HEK293T (cell line): ENCODE measurements at regions of chr16 and their contacts with region 1.

Region 1: DNA sequence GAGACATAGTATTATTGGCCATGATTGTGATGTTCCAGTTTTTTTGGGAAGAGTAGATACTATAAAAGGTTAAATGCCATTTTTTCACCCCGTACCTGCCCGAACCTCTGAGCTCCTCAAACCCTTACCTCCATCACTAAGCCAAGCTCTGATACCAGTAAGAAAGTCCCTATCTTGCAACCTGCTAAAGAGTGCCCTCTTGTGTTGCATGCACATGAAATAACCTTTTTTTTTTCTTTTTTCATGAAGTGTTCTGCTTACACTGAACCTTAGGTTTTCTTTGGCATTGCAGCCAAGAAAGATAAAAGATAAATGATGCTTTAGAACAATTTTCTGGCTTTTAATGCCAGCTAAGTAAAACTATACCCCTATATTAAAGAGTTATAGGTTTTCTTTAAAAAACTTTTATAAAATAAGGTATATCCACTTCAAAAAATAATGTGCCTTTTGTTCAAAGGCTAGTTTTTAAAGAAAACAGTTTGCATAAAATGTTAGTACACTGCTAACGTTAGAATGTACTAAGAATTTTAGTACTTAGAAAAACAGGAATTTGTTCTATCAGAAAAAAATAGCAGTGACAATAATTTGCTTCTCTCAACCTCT is 295.3 kb upstream of the PMFBP1 start:
- DNase-seq: peak; percentile 31

Region 2: GRCh38 chr16:72124761-72125634 is 342.3 kb before region 1 on chr16:
- CTCF ChIA-PET with region 1: interaction called, 12 read pairs
- POLR2A ChIA-PET with region 1: no interaction called
- DNase-seq: peak; percentile 78

Region 3: GRCh38 chr16:72220875-72221629 is 246.2 kb before region 1 on chr16:
- CTCF ChIA-PET with region 1: no interaction called
- POLR2A ChIA-PET with region 1: no interaction called
- DNase-seq: no peak

Region 4: GRCh38 chr16:72422308-72422897 is 44.9 kb before region 1 on chr16:
- CTCF ChIA-PET with region 1: no interaction called
- POLR2A ChIA-PET with region 1: no interaction called
- DNase-seq: no peak

Region 5: DNA sequence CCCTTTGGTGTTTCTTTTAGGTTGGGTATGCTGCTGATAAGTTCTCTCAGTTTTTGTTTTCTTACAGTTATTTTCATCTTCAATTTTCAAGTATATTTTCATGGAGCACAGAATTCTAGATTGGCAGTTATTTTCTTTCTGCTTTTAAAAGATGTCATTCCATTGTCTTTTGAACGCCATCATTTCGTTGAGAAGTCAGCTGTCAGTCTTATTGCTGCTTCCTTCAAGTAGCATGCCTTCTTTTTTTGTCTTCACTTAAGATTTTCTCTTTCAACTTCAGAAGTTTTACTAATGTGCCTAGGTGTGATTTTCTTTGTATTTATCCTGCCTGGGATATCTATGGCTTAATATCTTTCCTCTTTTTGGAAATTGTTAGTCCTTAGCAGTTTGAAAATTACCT is 33.1 kb before region 1 on chr16:
- CTCF ChIA-PET with region 1: no interaction called
- POLR2A ChIA-PET with region 1: no interaction called
- DNase-seq: no peak

Region 6: DNA sequence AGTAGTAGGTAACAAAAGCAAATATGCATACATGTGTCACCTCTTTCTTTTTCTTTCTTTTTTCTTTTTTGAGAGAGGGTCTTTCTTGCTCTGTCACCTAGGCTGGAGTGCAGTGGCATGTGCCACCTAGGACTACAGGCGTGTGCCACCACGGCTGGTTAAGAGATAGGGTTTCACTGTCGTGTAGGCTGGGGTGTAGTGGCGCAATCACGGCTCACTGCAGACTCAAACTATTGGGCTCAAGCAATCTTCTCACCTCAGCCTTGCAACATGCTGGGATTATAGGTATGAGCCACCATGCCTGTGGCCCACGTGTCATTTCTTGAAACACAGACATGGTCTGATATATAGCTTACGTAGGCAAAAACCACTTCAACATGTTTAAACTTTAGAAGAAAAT is 102.4 kb after region 1 on chr16:
- CTCF ChIA-PET with region 1: no interaction called
- POLR2A ChIA-PET with region 1: no interaction called
- DNase-seq: no peak